IMR-90 (cell line): ENCODE measurements at regions of chr17 and their contacts with region 1.

Region 1: GRCh38 chr17:33142705-33143299 is 150.3 kb downstream of the ASIC2 start:
- DNase-seq: peak; percentile 24
- ATAC-seq: peak; percentile 66
- H3K4me3 ChIP-seq: no peak overlapping the region
- H3K27ac ChIP-seq: no peak overlapping the region
- H3K4me1 ChIP-seq: no peaks in the 10 kb centered on the region
- H3K27me3 ChIP-seq: no peaks in the 10 kb centered on the region
- CTCF ChIP-seq: no peak
- POLR2A ChIP-seq: no peak
- RAD21 ChIP-seq: no peak

Region 2: DNA sequence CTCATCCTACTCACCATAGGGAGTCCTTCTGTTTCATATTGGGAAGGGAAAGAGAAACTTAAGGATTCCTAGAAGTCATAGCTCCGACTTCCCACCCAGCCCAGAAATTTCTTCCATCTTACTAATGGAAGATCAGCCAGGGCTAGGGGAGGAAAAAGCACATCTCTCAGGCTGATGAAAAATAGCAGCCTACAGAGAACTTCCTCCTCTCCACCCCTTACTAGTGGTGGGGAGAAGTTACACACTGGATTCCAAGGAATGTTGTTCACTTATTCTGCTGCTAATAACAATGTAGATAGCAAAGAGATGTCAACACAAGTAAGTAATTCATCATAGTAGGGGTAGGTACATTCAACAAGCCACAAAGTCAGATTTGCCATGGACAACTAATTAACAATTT is 56.8 kb before region 1 on chr17:
- CTCF ChIA-PET with region 1: no interaction called
- POLR2A ChIA-PET with region 1: no interaction called
- dilution Hi-C with region 1: no loop called
- in situ Hi-C with region 1: loop called (anchors 10 kb)
- intact Hi-C with region 1: no loop called
- DNase-seq: no peak
- ATAC-seq: no peak
- H3K4me3 ChIP-seq: no peak overlapping the region
- H3K27ac ChIP-seq: no peak overlapping the region
- H3K4me1 ChIP-seq: no peaks in the 10 kb centered on the region
- H3K27me3 ChIP-seq: no peaks in the 10 kb centered on the region
- CTCF ChIP-seq: no peak
- POLR2A ChIP-seq: no peak
- RAD21 ChIP-seq: no peak

Region 3: DNA sequence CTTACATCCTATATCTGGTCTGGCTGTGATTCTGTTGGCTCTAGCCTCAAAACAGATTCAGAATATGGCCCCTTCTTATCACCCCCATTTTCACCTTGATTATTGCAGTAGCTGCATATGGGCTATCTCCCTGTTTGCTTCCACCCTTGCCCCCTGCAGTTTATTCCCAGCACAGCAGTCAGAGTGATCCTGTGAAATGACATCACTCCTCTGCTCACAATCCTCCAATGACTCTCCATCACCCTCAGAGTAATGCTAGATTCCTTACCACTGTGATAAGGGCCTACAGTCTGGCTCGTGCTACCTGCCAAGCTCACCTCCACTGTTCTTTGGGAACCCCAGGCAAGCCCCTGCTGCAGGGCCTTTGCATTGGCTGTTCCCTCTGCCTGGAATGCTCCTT is 57.8 kb after region 1 on chr17:
- CTCF ChIA-PET with region 1: no interaction called
- POLR2A ChIA-PET with region 1: no interaction called
- dilution Hi-C with region 1: no loop called
- in situ Hi-C with region 1: no loop called
- intact Hi-C with region 1: no loop called
- DNase-seq: peak; percentile 20
- ATAC-seq: peak; percentile 86
- H3K4me3 ChIP-seq: no peak overlapping the region
- H3K27ac ChIP-seq: no peak overlapping the region
- H3K4me1 ChIP-seq: no peaks in the 10 kb centered on the region
- H3K27me3 ChIP-seq: peaks cover 2% of the 10 kb centered on the region
- CTCF ChIP-seq: peak; percentile 37
- POLR2A ChIP-seq: no peak
- RAD21 ChIP-seq: no peak

Region 4: DNA sequence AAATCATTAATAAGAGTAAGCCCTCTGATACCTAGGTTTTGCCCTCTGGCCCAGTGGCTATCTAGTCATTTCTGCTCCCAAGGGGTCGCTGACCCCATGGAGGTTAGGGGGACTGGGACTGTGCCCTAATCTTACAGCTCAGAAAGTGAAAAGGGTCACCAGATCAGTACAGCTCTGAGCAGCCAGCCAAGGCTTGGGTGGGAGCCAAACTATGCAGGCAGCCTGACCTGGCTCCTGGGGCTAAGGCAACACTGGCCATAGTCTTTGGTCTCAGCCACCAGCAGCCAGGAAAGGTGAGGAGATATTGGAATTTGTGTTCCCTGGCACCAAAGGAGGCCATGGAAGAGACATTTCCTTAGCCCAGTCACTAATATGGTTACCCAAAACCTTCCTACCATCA is 82.7 kb after region 1 on chr17:
- CTCF ChIA-PET with region 1: no interaction called
- POLR2A ChIA-PET with region 1: no interaction called
- dilution Hi-C with region 1: no loop called
- in situ Hi-C with region 1: no loop called
- intact Hi-C with region 1: loop called (anchors 10 kb)
- DNase-seq: no peak
- ATAC-seq: no peak
- H3K4me3 ChIP-seq: no peak overlapping the region
- H3K27ac ChIP-seq: no peak overlapping the region
- H3K4me1 ChIP-seq: no peaks in the 10 kb centered on the region
- H3K27me3 ChIP-seq: 0 out of 2 replicates have a peak, but pooled peaks cover 2% of the 10 kb centered on the region
- CTCF ChIP-seq: no peak
- POLR2A ChIP-seq: no peak
- RAD21 ChIP-seq: no peak

Region 5: GRCh38 chr17:33284022-33284421 is 141.2 kb after region 1 on chr17:
- CTCF ChIA-PET with region 1: no interaction called
- POLR2A ChIA-PET with region 1: no interaction called
- dilution Hi-C with region 1: no loop called
- in situ Hi-C with region 1: no loop called
- intact Hi-C with region 1: loop called (anchors 10 kb)
- DNase-seq: peak; percentile 87
- ATAC-seq: peak; percentile 88
- H3K4me3 ChIP-seq: no peak overlapping the region
- H3K27ac ChIP-seq: peak overlapping the region; percentile 74
- H3K4me1 ChIP-seq: peaks cover 12% of the 10 kb centered on the region
- H3K27me3 ChIP-seq: no peaks in the 10 kb centered on the region; the same call in 1 of the 2 replicates
- CTCF ChIP-seq: no peak
- POLR2A ChIP-seq: no peak
- RAD21 ChIP-seq: no peak